GM10248 (cell line): ENCODE measurements at regions of chr12 and their contacts with region 1.

Region 1: GRCh38 chr12:11581179-11581755 is 68.2 kb upstream of the ETV6 start:
- DNase-seq: peak; percentile 38
- CTCF ChIP-seq: peak; percentile 27

Region 2: DNA sequence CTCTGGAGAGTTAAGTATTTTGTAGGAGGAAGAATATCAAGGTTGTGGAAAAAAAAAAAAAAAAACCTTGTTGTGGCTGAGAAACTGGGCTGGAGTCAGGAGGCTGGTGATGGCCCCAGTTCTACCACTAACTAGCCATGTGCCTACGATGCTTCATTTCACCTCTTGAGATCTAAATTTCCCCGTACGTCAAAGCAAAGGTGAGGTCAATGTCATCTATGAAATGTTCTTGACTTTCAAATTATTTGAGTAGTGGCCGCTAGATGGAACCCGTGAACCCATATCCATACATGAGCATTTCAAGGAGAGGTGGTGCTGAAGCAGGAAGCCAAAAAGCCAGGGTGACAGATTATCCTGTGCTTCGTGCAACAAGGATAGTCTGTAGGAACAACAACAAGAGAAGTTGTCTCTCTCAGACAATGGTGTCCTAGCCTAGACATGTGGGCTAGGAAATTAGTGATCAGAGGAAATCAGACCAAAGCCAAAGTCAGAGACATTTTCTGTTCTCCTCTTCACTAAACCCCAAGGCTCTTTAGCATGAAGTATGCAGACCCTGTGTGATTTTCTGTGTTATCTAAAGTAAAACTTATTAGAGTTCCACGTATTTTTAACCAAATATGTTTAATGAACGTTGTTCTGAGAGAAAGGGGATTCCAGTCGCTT is 27.3 kb before region 1 on chr12:
- CTCF ChIA-PET with region 1: interaction called, 32 read pairs
- POLR2A ChIA-PET with region 1: no interaction called
- DNase-seq: peak; percentile 70
- CTCF ChIP-seq: peak; percentile 53

Region 3: GRCh38 chr12:11568762-11569478 is 12.3 kb before region 1 on chr12:
- CTCF ChIA-PET with region 1: interaction called, 15 read pairs
- POLR2A ChIA-PET with region 1: no interaction called
- DNase-seq: peak; percentile 52
- CTCF ChIP-seq: no peak

Region 4: DNA sequence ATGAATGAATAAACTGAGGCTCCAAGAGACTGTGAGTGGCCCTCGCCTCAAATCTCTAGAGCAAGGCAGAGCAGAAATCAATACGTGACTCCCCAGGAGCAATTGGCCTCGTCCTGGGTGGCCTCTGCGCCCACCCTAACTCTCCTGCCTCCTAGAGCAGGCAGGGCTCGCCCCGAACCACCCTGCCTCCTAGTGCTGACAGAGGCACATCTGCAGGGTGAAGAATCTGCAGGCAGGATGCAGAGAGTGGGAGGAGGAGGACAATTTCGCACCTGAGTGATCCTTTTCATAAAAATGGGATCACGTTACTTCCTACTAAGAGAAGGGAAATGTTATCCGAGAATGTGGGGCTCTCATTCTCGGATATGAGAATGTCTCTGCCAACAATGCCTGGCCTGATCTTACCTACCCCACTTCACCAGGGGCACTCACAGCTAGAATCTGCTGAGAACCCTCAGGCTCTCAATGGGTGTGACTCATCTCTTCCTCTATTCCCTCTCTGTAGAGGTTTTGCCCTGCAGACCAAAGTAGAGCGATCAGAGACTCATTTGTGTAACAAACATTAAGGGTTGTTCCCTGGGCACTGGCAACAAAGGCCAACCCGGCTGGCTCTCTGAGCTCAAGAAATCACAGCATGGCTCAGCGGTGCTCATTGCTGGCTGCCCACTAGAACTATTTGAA is 427.8 kb after region 1 on chr12:
- CTCF ChIA-PET with region 1: interaction called, 20 read pairs
- POLR2A ChIA-PET with region 1: no interaction called
- DNase-seq: peak; percentile 64
- CTCF ChIP-seq: peak; percentile 57